Activated CD8-positive, alpha-beta memory T cell treated with anti-CD3 and anti-CD28 coated beads, Interleukin-2, amount 10 ng/mL, durations not matched to agents 7 days and 5 days (primary cell): ENCODE measurements at regions of chr6 and their contacts with region 1.

Region 1: GRCh38 chr6:10954590-10955010 is 67.7 kb downstream of the SYCP2L start:
- DNase-seq: peak; percentile 82
- ATAC-seq: peak; percentile 80
- H3K4me3 Mint-ChIP-seq: no peak overlapping the region
- H3K27ac Mint-ChIP-seq: no peak overlapping the region
- H3K4me1 Mint-ChIP-seq: peaks cover 1% of the 10 kb centered on the region
- H3K27me3 Mint-ChIP-seq: peaks cover 18% of the 10 kb centered on the region

Region 2: GRCh38 chr6:10939840-10940239 is 14.8 kb before region 1 on chr6:
- CTCF ChIA-PET with region 1: interaction called, 11 read pairs
- DNase-seq: no peak
- ATAC-seq: no peak
- H3K4me3 Mint-ChIP-seq: no peak overlapping the region
- H3K27ac Mint-ChIP-seq: no peak overlapping the region
- H3K4me1 Mint-ChIP-seq: no peaks in the 10 kb centered on the region
- H3K27me3 Mint-ChIP-seq: peaks cover 25% of the 10 kb centered on the region

Region 3: GRCh38 chr6:11064836-11065235 is 110.2 kb after region 1 on chr6:
- CTCF ChIA-PET with region 1: interaction called, 24 read pairs
- DNase-seq: no peak
- ATAC-seq: no peak
- H3K4me3 Mint-ChIP-seq: no peak overlapping the region
- H3K27ac Mint-ChIP-seq: no peak overlapping the region
- H3K4me1 Mint-ChIP-seq: no peaks in the 10 kb centered on the region
- H3K27me3 Mint-ChIP-seq: peaks cover 23% of the 10 kb centered on the region

Region 4: DNA sequence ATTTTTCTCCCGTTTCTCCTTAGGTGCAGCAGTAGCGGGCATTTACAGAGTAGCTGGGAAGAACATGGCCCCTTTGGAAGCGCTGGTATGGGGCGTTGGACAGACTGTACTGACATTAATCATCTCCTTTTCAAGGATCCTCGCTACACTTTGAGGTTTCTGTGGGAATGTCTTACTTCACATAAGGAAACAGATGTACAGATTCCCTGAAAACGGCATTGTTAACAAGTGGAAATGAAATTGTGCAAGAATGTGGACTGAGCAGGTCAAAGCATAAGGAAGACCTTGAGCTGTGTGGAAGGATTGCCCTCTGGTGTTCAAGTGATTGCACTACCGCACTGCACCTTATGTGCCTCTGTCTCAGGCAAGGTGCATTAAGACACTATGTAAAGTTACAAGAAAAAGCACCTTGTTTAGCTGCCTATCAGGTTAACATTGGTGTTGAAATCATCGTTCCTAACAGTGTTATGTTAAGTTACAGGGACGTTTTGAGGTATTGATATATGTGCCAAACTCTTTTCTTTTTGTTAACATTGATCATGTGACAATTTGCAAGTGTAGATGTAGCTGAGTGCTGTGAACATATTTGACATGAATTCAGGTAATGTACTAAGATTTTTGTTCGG is 620.9 kb after region 1 on chr6:
- CTCF ChIA-PET with region 1: interaction called, 11 read pairs
- DNase-seq: peak; percentile 72
- ATAC-seq: peak; percentile 99
- H3K4me3 Mint-ChIP-seq: no peak overlapping the region
- H3K27ac Mint-ChIP-seq: no peak overlapping the region
- H3K4me1 Mint-ChIP-seq: no peaks in the 10 kb centered on the region
- H3K27me3 Mint-ChIP-seq: no peaks in the 10 kb centered on the region